ENCODE measurements at regions of chr11 and their contacts with region 1.

Region 1: GRCh38 chr11:12235947-12236743 is 125.8 kb downstream of the MICAL2 start:
- DNase-seq: no peak
- H3K4me3 ChIP-seq: no peak overlapping the region
- H3K27ac ChIP-seq: peak overlapping the region; percentile 36
- H3K4me1 ChIP-seq: peaks cover 55% of the 10 kb centered on the region
- H3K27me3 ChIP-seq: no peaks in the 10 kb centered on the region
- CTCF ChIP-seq: peak; percentile 81

Region 2: GRCh38 chr11:12087075-12088004 is 148.8 kb before region 1 on chr11:
- intact Hi-C with region 1: loop called (anchors 10 kb)
- DNase-seq: no peak
- H3K4me3 ChIP-seq: peak overlapping the region; percentile 22
- H3K27ac ChIP-seq: peak overlapping the region; percentile 90
- H3K4me1 ChIP-seq: peaks cover 74% of the 10 kb centered on the region
- H3K27me3 ChIP-seq: no peaks in the 10 kb centered on the region
- CTCF ChIP-seq: peak; percentile 28

Region 3: GRCh38 chr11:12100841-12101242 is 135.3 kb before region 1 on chr11:
- intact Hi-C with region 1: no loop called
- DNase-seq: peak; percentile 64
- H3K4me3 ChIP-seq: no peak overlapping the region
- H3K27ac ChIP-seq: peak overlapping the region; percentile 43
- H3K4me1 ChIP-seq: peaks cover 56% of the 10 kb centered on the region
- H3K27me3 ChIP-seq: no peaks in the 10 kb centered on the region
- CTCF ChIP-seq: no peak